ENCODE measurements at regions of chr4 and their contacts with region 1.

Region 1: DNA sequence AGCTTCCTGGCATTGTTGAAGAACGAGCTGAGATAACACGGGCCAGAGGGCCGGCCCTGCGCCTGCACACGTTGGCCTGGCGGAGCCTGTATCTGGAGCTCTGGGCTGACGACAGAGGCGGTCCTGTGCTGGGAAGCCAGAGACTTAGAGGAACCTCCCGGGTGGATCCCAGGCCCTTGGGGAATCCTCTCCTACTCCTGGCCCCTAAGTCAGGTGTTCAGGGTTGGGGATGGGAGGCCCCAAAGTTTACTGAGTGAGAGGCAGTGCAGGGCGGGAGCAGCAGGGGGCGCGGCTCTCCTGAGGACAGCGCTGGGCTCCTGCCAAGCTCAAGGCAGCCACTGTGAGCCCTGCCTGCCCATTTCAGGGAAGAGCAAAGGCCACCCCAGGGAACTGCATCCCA is 2.5 kb upstream of the HTRA3 start:
- DNase-seq: peak; percentile 82
- CTCF ChIP-seq: peak; percentile 73

Region 2: DNA sequence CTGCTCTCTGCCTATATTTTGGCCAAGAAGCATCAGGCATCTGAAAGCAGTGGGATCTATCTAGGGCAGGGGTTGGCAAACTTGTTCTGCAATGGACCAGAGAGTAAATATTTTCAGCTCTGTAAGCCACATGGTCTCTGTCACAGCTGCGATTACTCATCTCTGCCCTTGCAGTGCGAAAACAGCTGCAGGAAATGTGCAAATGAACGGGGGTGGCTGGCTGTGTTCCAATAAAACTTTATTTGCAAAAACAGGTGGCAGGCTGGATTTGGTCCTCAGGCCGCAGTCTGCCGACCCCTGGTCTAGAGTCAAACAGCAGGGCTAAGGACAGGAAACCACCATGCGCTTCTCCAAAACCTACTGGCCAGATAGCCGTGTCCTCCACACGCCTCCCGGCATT is 124.9 kb after region 1 on chr4:
- CTCF ChIA-PET with region 1: interaction called, 16 read pairs
- POLR2A ChIA-PET with region 1: no interaction called
- DNase-seq: peak; percentile 57
- CTCF ChIP-seq: no peak